ENCODE measurements at regions of chr10 and their contacts with region 1.

Region 1: GRCh38 chr10:7872041-7872442 is 53.7 kb downstream of the TAF3 start:
- DNase-seq: peak in 1 of 35 experiments; percentile 53
- ATAC-seq: no peak
- H3K4me3 ChIP-seq: no peak overlapping the region
- H3K4me3 Mint-ChIP-seq: peak overlapping the region in 2 of 3 donors; percentile 61 to 72
- H3K27ac ChIP-seq: no peak overlapping the region
- H3K27ac Mint-ChIP-seq: peak overlapping the region in 1 of 2 donors; percentile 52
- H3K4me1 ChIP-seq: peaks cover 0 to 4% of the 10 kb centered on the region in 2 experiments
- H3K4me1 Mint-ChIP-seq: peaks cover 20 to 26% (median 20%) of the 10 kb centered on the region in 3 donors
- H3K27me3 ChIP-seq: no peaks in the 10 kb centered on the region
- H3K27me3 Mint-ChIP-seq: no peaks in the 10 kb centered on the region

Region 2: DNA sequence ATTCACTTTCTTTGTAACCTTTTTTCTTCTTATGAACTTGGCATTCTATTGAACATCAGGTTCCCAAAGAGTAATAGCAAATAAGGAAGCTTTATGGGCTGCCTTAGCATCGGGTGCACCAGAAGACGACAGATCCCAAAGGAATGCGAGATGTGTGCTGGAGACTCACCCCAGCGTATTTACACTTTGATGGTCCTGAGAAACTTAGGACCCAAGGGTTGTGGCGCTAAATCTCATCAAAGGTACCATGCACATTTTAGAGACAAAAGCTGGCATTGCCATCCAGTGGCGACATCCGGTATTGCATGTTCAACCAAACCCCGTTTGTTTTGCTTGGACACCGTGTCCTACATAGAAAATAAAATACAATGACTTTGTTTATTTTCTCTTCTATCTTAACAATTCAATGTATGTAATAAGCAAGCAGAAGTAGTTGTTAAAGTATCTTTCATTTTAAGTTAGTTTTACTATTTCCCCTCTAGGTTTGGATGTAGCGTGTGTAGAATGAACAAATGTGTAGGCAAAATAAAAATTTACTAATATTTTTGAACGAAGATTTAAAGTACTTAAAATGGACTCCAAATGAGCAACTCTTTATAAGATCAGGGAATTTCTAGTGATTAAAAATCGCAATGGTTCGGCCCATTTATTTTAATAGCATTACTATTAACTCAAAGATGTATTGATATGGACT is 1337.2 kb after region 1 on chr10:
- CTCF ChIA-PET with region 1: interaction called, 4 to 11 read pairs
- POLR2A ChIA-PET with region 1: no interaction called
- DNase-seq: peak in 34 of 35 experiments; percentile 23 to 80 (median 61)
- ATAC-seq: peak; percentile 50 to 66 (median 62)
- H3K4me3 ChIP-seq: peak overlapping the region in 1 of 2 donors; percentile 10
- H3K4me3 Mint-ChIP-seq: no peak overlapping the region
- H3K27ac ChIP-seq: no peak overlapping the region
- H3K27ac Mint-ChIP-seq: no peak overlapping the region
- H3K4me1 ChIP-seq: peaks cover 0 to 4% of the 10 kb centered on the region in 2 experiments
- H3K4me1 Mint-ChIP-seq: peaks cover 6 to 9% (median 7%) of the 10 kb centered on the region in 3 donors
- H3K27me3 ChIP-seq: peaks cover 0 to 6% of the 10 kb centered on the region in 2 experiments
- H3K27me3 Mint-ChIP-seq: peaks cover 9 to 10% of the 10 kb centered on the region in 2 donors

Region 3: DNA sequence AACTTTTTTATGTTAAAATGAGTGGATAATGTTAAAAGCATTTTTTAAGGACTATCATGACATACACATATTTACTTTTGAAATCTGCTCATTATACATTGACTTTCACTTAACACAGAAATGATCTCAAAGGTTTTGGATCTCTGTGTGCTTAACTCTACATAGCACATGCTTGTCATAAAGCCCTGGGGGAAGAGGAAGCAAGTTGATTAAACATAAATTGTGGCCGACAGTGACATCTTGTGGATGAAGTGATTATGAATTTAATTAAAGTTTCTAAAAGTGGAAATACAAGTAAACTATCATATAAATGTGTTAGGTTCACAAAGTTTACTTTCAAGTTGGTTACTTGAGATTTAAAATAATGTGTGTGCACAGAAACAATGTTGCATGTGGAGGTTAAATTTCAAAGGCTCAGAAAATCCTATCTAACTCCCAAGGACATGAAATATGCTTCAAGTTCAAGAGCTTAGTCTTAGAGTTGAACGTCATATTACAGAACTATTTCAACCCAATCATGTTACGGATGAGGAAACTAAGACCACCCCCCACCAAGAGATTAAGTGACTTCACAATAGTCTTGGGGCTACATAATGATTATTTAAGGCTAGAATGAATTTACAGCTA is 1430.2 kb after region 1 on chr10:
- CTCF ChIA-PET with region 1: interaction called, 3 to 10 read pairs
- POLR2A ChIA-PET with region 1: interaction called in 1 of 2 experiments, 3 read pairs
- DNase-seq: peak in 10 of 35 experiments; percentile 3 to 69 (median 14)
- ATAC-seq: peak in 2 of 4 experiments; percentile 32 to 42
- H3K4me3 ChIP-seq: no peak overlapping the region
- H3K4me3 Mint-ChIP-seq: no peak overlapping the region
- H3K27ac ChIP-seq: no peak overlapping the region
- H3K27ac Mint-ChIP-seq: no peak overlapping the region
- H3K4me1 ChIP-seq: no peaks in the 10 kb centered on the region
- H3K4me1 Mint-ChIP-seq: no peaks in the 10 kb centered on the region
- H3K27me3 ChIP-seq: no peaks in the 10 kb centered on the region
- H3K27me3 Mint-ChIP-seq: peaks cover 8% of the 10 kb centered on the region in 2 donors

Measured in T-cell (primary cell).